MCF 10A (cell line): ENCODE measurements at regions of chr2 and their contacts with region 1.

Region 1: GRCh38 chr2:75676464-75676863 is 29.9 kb downstream of the MRPL19 start:
- DNase-seq: no peak
- H3K4me3 Mint-ChIP-seq: no peak overlapping the region
- H3K27ac Mint-ChIP-seq: no peak overlapping the region
- H3K4me1 Mint-ChIP-seq: no peaks in the 10 kb centered on the region
- H3K27me3 Mint-ChIP-seq: no peaks in the 10 kb centered on the region
- CTCF ChIP-seq: no peak

Region 2: GRCh38 chr2:75640621-75641121 is 35.8 kb before region 1 on chr2:
- CTCF ChIA-PET with region 1: interaction called, 65 read pairs
- POLR2A ChIA-PET with region 1: interaction called, 10 read pairs
- intact Hi-C with region 1: loop called (anchors 1 kb)
- DNase-seq: peak; percentile 77
- H3K4me3 Mint-ChIP-seq: no peak overlapping the region
- H3K27ac Mint-ChIP-seq: no peak overlapping the region
- H3K4me1 Mint-ChIP-seq: peaks cover 16% of the 10 kb centered on the region
- H3K27me3 Mint-ChIP-seq: peaks cover 29% of the 10 kb centered on the region
- CTCF ChIP-seq: peak; percentile 97

Region 3: GRCh38 chr2:75654012-75654411 is 22.5 kb before region 1 on chr2:
- CTCF ChIA-PET with region 1: interaction called, 16 read pairs
- POLR2A ChIA-PET with region 1: interaction called, 6 read pairs
- intact Hi-C with region 1: no loop called
- DNase-seq: no peak
- H3K4me3 Mint-ChIP-seq: no peak overlapping the region
- H3K27ac Mint-ChIP-seq: no peak overlapping the region
- H3K4me1 Mint-ChIP-seq: peaks cover 6% of the 10 kb centered on the region
- H3K27me3 Mint-ChIP-seq: no peaks in the 10 kb centered on the region
- CTCF ChIP-seq: peak; percentile 13

Region 4: GRCh38 chr2:75688196-75688595 is 11.7 kb after region 1 on chr2:
- CTCF ChIA-PET with region 1: interaction called, 13 read pairs
- POLR2A ChIA-PET with region 1: interaction called, 6 read pairs
- intact Hi-C with region 1: no loop called
- DNase-seq: no peak
- H3K4me3 Mint-ChIP-seq: no peak overlapping the region
- H3K27ac Mint-ChIP-seq: no peak overlapping the region
- H3K4me1 Mint-ChIP-seq: no peaks in the 10 kb centered on the region
- H3K27me3 Mint-ChIP-seq: no peaks in the 10 kb centered on the region
- CTCF ChIP-seq: no peak